ENCODE measurements at regions of chr7 and their contacts with region 1.

Region 1: DNA sequence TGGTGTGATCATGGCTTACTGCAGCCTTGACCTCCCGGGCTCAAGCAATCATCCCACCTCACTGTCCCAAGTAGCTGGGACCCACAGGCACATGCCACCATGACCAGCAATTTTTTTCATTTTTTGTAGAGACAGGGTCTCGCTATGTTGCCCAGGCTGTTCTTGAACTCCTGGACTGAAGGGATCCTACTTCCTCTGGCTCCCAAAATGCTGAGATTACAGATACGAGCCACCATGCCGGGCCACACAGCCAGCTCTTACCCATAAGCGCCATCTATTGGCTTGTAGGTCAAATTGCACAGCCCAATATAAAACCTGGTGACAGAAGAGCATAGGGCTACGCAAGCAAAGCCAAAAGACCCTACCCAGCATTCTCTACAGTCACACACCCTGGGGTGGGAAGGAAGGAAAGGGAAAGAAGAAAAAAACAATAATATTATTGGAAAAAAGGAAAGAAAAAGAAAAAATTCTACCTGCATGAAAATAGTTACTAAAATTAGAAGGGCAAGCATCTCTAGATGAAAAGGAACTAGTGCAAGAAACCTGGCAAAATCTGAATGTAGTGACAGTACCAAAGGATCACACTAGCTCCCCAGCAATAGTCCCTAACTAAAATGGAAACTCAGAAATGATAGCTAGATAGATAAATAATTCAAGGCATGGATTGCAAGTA is 29.4 kb upstream of the AMPH start:
- DNase-seq: peak; percentile 17
- H3K4me3 ChIP-seq: no peak overlapping the region
- H3K27ac ChIP-seq: no peak overlapping the region
- H3K4me1 ChIP-seq: no peaks in the 10 kb centered on the region
- H3K27me3 ChIP-seq: no peaks in the 10 kb centered on the region
- CTCF ChIP-seq: peak; percentile 67 to 87

Region 2: DNA sequence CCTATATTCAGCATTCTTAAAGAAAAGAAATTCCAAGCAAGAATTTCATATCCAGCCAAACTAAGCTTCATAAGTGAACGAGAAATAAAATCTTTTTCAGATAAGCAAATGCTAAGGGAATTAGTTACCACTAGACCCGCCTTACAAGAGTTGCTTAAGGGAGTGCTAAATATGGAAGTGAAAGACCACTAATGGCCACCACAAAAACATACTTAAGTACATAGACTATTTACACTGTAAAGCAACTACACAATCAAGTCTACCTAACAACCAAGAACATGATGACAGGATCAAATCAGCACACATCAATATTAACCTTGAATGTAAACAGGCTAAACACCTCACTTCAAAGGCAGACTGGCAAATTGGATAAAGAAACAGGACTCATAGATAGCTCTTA is 854.4 kb before region 1 on chr7:
- CTCF ChIA-PET with region 1: no interaction called
- dilution Hi-C with region 1: no loop called
- in situ Hi-C with region 1: no loop called
- intact Hi-C with region 1: no loop called
- DNase-seq: no peak
- H3K4me3 ChIP-seq: no peak overlapping the region
- H3K27ac ChIP-seq: no peak overlapping the region
- H3K4me1 ChIP-seq: no peaks in the 10 kb centered on the region
- H3K27me3 ChIP-seq: no peaks in the 10 kb centered on the region
- CTCF ChIP-seq: no peak

Region 3: DNA sequence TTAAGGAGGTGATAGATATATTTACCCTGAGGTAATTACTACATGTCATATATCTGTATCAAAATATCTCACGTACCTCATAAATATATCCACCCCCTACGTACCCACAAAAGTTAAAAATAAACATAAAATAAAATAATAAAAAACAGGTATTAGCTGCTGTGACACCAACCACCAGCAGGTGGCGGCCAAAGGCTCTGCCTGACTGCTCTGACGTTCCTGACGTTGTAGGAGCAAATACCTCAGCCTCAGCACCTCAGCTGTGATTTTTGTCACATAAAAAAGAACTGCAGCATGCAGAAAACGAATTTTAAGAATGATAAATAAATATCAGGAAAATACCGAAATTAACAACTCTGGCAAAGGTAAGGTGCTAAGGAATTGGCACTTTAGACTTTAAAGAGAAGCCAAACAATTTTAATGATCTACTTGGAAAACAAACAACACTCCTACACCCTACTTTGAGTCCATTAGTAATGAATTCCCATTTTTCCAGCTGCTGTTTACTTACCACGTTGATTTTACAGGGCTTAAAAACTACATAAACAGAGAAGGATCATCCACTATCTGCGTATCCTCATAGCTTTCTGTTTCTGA is 261.7 kb before region 1 on chr7:
- CTCF ChIA-PET with region 1: interaction called, 3 read pairs
- dilution Hi-C with region 1: no loop called
- in situ Hi-C with region 1: loop called in 1 of 2 experiments (anchors 10 kb)
- intact Hi-C with region 1: loop called (anchors 1 kb)
- DNase-seq: peak; percentile 5
- H3K4me3 ChIP-seq: no peak overlapping the region
- H3K27ac ChIP-seq: no peak overlapping the region
- H3K4me1 ChIP-seq: no peaks in the 10 kb centered on the region
- H3K27me3 ChIP-seq: no peaks in the 10 kb centered on the region
- CTCF ChIP-seq: peak; percentile 76 to 86

Region 4: GRCh38 chr7:38424750-38425463 is 235.7 kb before region 1 on chr7:
- CTCF ChIA-PET with region 1: no interaction called
- dilution Hi-C with region 1: no loop called
- in situ Hi-C with region 1: loop called in 1 of 2 experiments (anchors 25 kb)
- intact Hi-C with region 1: no loop called
- DNase-seq: no peak
- H3K4me3 ChIP-seq: no peak overlapping the region
- H3K27ac ChIP-seq: no peak overlapping the region
- H3K4me1 ChIP-seq: no peaks in the 10 kb centered on the region
- H3K27me3 ChIP-seq: no peaks in the 10 kb centered on the region
- CTCF ChIP-seq: peak in 1 of 2 donors; percentile 32

Region 5: GRCh38 chr7:38451840-38452239 is 208.7 kb before region 1 on chr7:
- CTCF ChIA-PET with region 1: no interaction called
- dilution Hi-C with region 1: no loop called
- in situ Hi-C with region 1: loop called in 1 of 2 experiments (anchors 25 kb)
- intact Hi-C with region 1: loop called (anchors 1 kb)
- DNase-seq: peak; percentile 4
- H3K4me3 ChIP-seq: no peak overlapping the region
- H3K27ac ChIP-seq: no peak overlapping the region
- H3K4me1 ChIP-seq: no peaks in the 10 kb centered on the region
- H3K27me3 ChIP-seq: peaks cover 2% of the 10 kb centered on the region
- CTCF ChIP-seq: peak in 1 of 2 donors; percentile 50